Activated CD4-positive, alpha-beta T cell treated with anti-CD3 and anti-CD28 coated beads, Interleukin-2, amount 10 ng/mL, durations not matched to agents 24 days and 14 days (primary cell): ENCODE measurements at regions of chr1 and their contacts with region 1.

Region 1: DNA sequence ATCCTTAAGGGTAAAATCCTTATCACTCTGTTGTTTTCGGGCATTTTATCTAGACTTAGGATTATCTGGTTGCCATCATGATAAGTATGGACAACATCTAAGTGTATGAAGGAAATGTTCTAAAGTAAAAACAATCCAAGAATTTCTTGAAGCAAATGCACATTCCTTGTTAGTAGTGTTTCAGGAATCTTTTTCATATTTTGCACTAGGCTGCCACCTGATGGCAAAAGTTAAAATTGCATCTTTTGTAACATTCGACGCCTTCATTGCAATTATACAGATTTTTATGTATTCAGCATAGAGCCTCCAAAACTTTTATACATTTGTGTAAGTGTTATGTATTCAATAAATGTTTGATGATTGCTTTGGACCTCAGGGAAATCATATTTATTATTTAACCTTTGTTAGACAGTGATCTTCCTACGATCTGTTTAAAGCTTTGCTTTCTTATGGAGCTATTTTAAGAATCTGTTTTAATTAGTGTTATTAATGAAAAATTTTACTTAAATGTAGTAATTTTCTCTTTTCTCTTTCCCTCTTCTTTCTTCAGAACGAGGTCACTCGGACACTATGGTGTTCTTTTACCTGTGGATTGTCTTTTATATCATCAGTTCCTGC is 49.4 kb upstream of the KIAA1614 start:
- DNase-seq: peak; percentile 80
- H3K4me3 Mint-ChIP-seq: no peak overlapping the region
- H3K27ac Mint-ChIP-seq: no peak overlapping the region
- H3K4me1 Mint-ChIP-seq: no peaks in the 10 kb centered on the region
- H3K27me3 Mint-ChIP-seq: no peaks in the 10 kb centered on the region

Region 2: DNA sequence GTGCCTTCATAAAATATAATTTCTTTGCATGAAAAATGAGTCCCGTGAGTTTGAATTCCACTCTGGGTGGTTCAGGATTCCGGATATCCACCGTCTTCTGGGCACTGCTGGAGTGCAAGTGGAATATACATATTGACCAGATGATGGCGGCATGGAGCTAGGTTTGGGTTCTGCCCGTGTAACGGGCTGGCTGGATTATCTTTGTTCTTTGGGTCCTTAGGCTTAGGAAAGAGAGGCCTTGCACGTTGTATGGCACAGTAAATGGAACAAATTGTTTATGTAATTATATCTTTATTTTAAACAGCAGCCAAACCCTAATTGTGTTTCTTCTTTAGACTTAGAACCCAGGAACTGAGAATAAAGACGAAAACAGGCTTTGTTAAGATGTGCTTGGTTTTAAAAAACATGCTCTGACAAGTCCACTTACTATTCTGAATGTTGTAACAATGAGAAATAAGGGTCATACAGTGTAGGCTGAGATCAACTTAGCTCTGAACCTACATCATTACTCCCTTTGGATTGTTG is 347.3 kb before region 1 on chr1:
- intact Hi-C with region 1: loop called (anchors 5 kb)
- DNase-seq: peak; percentile 89
- H3K4me3 Mint-ChIP-seq: no peak overlapping the region
- H3K27ac Mint-ChIP-seq: no peak overlapping the region
- H3K4me1 Mint-ChIP-seq: no peaks in the 10 kb centered on the region
- H3K27me3 Mint-ChIP-seq: peaks cover 7% of the 10 kb centered on the region

Region 3: GRCh38 chr1:180962178-180962577 is 98.9 kb after region 1 on chr1:
- intact Hi-C with region 1: no loop called
- DNase-seq: no peak
- H3K4me3 Mint-ChIP-seq: no peak overlapping the region
- H3K27ac Mint-ChIP-seq: no peak overlapping the region
- H3K4me1 Mint-ChIP-seq: peaks cover 12% of the 10 kb centered on the region
- H3K27me3 Mint-ChIP-seq: no peaks in the 10 kb centered on the region